HEK293 (cell line): ENCODE measurements at regions of chr5 and their contacts with region 1.

Region 1: DNA sequence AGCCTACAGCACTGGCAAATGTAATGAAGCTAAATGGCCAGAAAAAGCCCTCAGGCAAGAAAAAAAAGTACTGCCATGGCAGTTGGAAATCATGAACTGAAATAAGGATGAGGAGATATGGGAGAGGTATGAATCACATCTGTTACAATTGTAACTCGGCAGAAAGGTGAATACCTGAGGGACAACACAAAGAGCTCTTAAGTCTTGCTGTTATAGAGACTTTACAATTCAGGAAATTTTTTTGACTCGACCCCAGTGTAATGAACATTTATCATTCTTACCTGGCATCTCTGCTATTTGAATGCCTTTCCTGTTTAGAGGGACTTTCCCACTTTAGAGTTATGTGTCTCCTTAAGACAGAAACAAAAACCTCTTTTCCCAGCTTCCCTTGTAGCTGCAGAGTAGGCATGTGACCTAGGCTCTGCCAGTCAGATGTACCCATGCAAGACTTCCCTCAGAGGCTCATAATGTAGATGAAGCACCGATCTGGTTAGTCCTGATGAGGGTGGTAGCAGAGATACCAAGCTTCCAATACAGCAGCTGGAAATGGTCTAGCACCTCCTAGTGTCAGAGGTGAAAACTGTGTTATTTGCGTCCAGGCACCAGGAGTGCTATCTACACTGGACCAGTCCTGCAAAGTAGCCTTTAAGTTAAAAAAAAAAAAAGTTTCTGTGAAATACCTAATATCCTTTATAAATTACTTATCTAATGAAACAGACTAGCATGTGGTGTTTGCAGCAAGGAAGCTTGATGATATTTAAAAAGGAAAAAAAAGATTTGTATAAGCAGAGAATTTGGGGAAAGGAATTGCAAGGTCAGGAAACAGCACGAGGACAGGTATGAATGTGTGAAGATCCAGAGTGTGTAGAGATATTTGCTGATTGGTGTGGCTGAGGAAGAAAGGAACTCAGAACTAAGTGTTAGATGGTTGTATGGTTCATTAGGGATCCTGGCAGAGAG is 146.9 kb upstream of the SLC1A3 start:
- H3K4me3 ChIP-seq: no peak overlapping the region
- H3K27ac ChIP-seq: no peak overlapping the region
- H3K4me1 ChIP-seq: no peaks in the 10 kb centered on the region
- CTCF ChIP-seq: peak; percentile 18; the same call in 1 of the 2 replicates

Region 2: DNA sequence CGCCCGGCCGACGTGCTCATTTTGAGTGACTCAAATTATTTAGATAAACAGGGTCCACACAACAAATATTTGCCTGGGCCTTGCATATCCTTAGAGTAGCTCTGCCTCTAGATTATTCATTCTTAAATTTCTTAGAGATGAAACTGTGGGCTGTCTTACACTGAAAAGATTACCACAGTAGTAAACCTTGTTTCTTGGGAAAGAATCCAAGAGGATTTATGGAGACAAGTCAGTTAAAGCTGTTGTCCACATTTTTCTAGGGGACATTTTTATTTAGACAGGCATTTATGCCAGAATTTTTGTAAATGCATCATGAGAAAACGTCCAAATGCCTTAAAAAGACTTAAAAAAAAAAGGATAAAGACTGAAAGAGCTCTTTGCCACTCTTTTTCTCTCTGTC is 125.1 kb before region 1 on chr5:
- CTCF ChIA-PET with region 1: no interaction called
- POLR2A ChIA-PET with region 1: no interaction called
- H3K4me3 ChIP-seq: no peak overlapping the region
- H3K27ac ChIP-seq: no peak overlapping the region
- H3K4me1 ChIP-seq: no peaks in the 10 kb centered on the region
- CTCF ChIP-seq: no peak

Region 3: DNA sequence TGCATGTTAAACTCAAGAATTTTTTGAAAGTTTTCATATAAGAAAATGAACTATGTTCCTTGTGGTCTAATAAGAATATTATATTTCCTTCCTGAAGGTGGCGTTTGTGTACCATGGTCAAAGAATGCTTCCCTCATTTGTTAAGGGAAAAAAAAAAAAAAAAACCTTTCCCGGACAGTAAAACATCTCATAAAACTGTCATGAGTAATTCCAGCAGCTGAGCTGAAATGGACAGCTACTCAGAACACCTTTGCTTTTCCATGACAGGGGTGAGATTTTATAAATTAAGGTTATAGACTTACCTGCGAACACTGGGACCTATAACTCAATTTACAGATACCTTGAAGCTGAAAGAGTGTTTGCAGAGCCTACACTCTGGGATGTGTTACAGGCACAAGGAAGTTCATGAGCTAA is 44.6 kb before region 1 on chr5:
- CTCF ChIA-PET with region 1: interaction called, 13 read pairs
- POLR2A ChIA-PET with region 1: no interaction called
- H3K4me3 ChIP-seq: no peak overlapping the region
- H3K27ac ChIP-seq: no peak overlapping the region
- H3K4me1 ChIP-seq: no peaks in the 10 kb centered on the region
- CTCF ChIP-seq: peak; percentile 71

Region 4: DNA sequence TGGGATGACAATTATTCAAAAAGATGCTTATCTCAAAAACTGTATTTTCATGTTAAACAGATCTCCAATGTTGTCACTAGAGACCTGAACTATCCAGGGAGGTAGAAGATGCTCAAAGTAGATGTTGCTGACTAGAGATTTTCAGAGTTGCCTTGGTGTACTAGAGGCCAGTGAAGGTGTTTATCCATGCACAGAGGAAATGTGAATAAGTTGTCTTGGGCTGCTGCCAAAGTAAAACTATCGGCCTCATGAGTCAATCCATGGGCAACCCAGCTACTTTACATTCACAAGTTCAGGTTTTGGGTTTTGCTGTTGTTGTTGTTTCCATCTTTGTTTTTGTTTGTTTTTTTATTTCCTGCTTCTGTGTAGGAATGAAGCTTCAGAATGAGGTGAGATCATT is 16.7 kb before region 1 on chr5:
- CTCF ChIA-PET with region 1: interaction called, 20 read pairs
- POLR2A ChIA-PET with region 1: no interaction called
- H3K4me3 ChIP-seq: no peak overlapping the region
- H3K27ac ChIP-seq: peak overlapping the region; percentile 81
- H3K4me1 ChIP-seq: peaks cover 4% of the 10 kb centered on the region
- CTCF ChIP-seq: no peak

Region 5: DNA sequence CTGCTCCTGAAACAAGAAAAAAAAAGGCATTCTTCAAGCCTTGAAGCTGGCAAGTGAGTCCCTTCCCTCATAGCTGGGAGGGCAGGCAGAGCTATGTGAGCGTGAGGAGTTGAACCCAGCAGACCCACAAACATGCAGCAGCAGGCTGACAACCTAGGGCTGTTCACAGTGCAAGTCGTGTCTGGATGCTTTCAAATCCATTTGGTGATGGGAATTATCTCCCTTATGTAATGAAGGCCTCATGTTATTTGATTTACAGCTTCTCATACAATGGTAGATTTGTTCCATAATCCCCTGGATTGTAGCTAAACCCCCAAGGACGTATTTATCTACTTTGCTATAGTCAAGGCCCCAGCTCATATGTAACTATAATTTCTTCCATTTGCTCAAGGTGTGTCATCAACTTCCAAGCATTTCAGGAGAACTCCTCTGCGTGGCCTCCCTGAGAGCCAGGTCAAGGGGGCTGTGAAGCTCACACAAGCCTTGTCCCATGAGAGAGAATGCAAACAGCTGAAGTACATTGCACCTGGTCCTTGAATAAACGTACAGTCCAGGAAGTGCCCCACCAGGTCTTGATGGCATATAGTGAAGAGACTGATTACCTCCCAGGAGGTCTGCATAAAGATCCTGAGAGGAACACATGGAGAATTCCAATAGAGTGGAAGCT is 22.1 kb after region 1 on chr5:
- CTCF ChIA-PET with region 1: interaction called, 23 read pairs
- POLR2A ChIA-PET with region 1: no interaction called
- H3K4me3 ChIP-seq: no peak overlapping the region
- H3K27ac ChIP-seq: no peak overlapping the region
- H3K4me1 ChIP-seq: no peaks in the 10 kb centered on the region
- CTCF ChIP-seq: no peak